Activated CD8-positive, alpha-beta memory T cell treated with anti-CD3 and anti-CD28 coated beads, Interleukin-2, amount 10 ng/mL, durations not matched to agents 7 days and 5 days (primary cell): ENCODE measurements at regions of chr2 and their contacts with region 1.

Region 1: GRCh38 chr2:28594289-28595108 is 98.6 kb downstream of the PLB1 start:
- DNase-seq: peak; percentile 89
- ATAC-seq: peak; percentile 91
- H3K4me3 Mint-ChIP-seq: peak overlapping the region; percentile 6
- H3K27ac Mint-ChIP-seq: peak overlapping the region; percentile 57
- H3K4me1 Mint-ChIP-seq: peaks cover 14% of the 10 kb centered on the region
- H3K27me3 Mint-ChIP-seq: no peaks in the 10 kb centered on the region

Region 2: DNA sequence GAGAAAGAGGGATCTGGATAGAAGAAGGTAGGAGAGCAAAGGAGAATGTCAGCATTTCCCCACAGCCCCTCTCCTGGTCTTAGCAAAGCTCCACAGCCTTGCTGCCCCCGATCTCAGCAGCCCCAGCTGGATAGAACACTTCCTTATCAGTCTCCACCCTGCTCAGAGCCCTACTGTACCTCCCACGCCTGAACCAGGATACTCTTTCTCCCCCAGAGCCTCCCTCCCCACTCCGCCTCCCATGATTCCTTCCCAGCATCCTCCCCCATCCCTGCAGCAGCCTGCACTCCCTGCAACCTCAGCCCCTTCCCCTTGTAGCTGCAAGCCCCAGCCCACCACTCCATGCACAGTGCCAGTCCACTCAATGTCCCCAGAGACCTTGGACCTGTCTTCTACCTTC is 72.8 kb before region 1 on chr2:
- CTCF ChIA-PET with region 1: no interaction called
- DNase-seq: no peak
- ATAC-seq: no peak
- H3K4me3 Mint-ChIP-seq: no peak overlapping the region
- H3K27ac Mint-ChIP-seq: no peak overlapping the region
- H3K4me1 Mint-ChIP-seq: peaks cover 10% of the 10 kb centered on the region
- H3K27me3 Mint-ChIP-seq: peaks cover 73% of the 10 kb centered on the region

Region 3: GRCh38 chr2:28566521-28567041 is 27.9 kb before region 1 on chr2:
- CTCF ChIA-PET with region 1: interaction called, 43 read pairs
- DNase-seq: peak; percentile 91
- ATAC-seq: peak; percentile 95
- H3K4me3 Mint-ChIP-seq: peak overlapping the region; percentile 84
- H3K27ac Mint-ChIP-seq: peak overlapping the region; percentile 84
- H3K4me1 Mint-ChIP-seq: peaks cover 22% of the 10 kb centered on the region
- H3K27me3 Mint-ChIP-seq: peaks cover 16% of the 10 kb centered on the region

Region 4: GRCh38 chr2:28583899-28584553 is 10.5 kb before region 1 on chr2:
- CTCF ChIA-PET with region 1: interaction called, 44 read pairs
- DNase-seq: peak; percentile 71
- ATAC-seq: peak; percentile 76
- H3K4me3 Mint-ChIP-seq: no peak overlapping the region
- H3K27ac Mint-ChIP-seq: no peak overlapping the region
- H3K4me1 Mint-ChIP-seq: peaks cover 41% of the 10 kb centered on the region
- H3K27me3 Mint-ChIP-seq: no peaks in the 10 kb centered on the region

Region 5: DNA sequence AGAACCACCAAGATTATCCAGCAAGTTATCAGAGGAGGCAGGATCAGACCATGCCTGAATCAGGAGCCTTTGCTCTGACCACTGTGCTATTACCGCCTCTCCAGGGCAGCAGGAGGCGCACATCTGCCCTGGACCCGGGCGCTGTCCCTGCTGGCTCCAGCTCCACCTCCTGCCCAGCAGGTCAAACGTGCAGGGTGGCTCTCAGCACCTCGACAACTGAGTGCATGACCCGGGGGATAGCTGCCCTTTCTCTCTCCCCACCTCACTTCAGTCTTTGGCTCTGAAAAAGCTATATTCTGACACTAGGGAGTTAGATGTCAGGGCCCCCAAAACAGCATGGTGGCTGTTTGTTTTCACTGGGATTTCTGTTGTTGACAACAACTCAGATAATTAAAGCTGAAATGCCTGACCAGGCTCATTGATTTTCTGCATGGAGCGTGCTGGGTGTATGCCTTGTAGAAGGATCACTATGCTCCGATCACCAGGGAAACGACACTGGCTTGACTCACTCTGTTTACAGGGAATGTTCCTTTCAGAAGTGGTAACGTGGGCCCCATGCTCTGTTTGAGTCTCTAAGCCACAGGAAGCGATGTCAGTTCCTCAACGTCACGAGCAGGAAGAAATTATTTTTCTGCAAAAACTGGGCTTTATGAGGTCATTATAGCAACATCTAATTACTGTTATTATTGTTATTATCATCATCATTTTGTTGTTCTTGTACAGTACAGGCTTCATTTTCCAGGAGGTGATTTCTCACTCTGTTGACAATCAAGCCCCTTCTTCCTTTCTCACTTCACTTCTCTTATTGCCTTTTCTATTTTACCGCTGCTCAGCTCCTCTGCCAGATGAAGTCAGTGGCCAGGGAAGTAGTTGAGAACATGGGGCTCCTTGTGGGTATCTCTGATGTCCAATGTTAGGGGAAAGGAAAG is 26.9 kb after region 1 on chr2:
- CTCF ChIA-PET with region 1: interaction called, 30 read pairs
- DNase-seq: peak; percentile 84
- ATAC-seq: peak; percentile 88
- H3K4me3 Mint-ChIP-seq: peak overlapping the region; percentile 36
- H3K27ac Mint-ChIP-seq: peak overlapping the region; percentile 96
- H3K4me1 Mint-ChIP-seq: peaks cover 82% of the 10 kb centered on the region
- H3K27me3 Mint-ChIP-seq: no peaks in the 10 kb centered on the region

Region 6: GRCh38 chr2:28751252-28751955 is 156.9 kb after region 1 on chr2 and contains the start of gene PPP1CB:
- CTCF ChIA-PET with region 1: interaction called, 142 read pairs
- DNase-seq: peak; percentile 95
- ATAC-seq: peak; percentile 86
- H3K4me3 Mint-ChIP-seq: peak within 1 kb of the TSS; percentile 91
- H3K27ac Mint-ChIP-seq: peak within 1 kb of the TSS; percentile 97
- H3K4me1 Mint-ChIP-seq: peaks cover 55% of the 10 kb centered on the region
- H3K27me3 Mint-ChIP-seq: no peaks in the 10 kb centered on the region
- total RNA-seq, gene PPP1CB: 153 to 218 TPM

Region 7: DNA sequence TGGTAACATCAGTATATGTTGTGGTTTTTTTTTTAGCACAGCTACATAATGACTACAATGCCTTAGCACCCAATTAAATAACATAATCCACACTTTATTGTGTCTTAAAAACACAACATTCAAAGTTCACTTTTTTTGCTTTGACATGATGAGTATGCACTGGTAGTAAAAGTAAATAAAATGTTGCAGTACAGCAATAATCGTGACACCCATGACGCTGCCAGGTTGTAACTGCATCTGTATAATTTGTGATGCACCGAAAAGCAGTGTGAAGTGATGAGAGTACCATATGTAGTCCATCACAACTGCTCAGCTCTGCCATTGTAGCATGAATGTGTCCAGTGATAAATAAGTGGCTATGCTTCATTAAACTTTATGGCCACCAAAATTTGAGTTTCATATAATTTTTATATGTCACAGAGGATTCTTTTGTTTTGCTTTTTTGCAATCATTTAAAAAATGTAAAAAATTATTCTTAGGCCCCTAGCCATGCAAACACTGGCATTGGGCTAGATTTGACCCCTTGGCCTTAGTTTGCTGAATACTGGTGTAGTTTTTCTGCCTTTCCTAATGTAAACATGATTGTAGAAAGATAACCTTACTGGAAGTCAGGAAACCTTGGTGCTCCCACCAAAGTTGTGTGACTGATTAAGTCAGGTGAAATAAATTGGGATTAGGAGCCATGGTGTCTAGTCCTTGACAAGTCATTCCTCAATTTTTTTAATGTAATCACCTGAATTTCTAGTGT is 173.0 kb after region 1 on chr2:
- CTCF ChIA-PET with region 1: interaction called, 25 read pairs
- DNase-seq: no peak
- ATAC-seq: no peak
- H3K4me3 Mint-ChIP-seq: no peak overlapping the region
- H3K27ac Mint-ChIP-seq: no peak overlapping the region
- H3K4me1 Mint-ChIP-seq: peaks cover 26% of the 10 kb centered on the region
- H3K27me3 Mint-ChIP-seq: no peaks in the 10 kb centered on the region

Region 8: GRCh38 chr2:28821295-28821958 is 226.9 kb after region 1 on chr2:
- CTCF ChIA-PET with region 1: interaction called, 14 read pairs
- DNase-seq: peak; percentile 71
- ATAC-seq: peak; percentile 87
- H3K4me3 Mint-ChIP-seq: no peak overlapping the region
- H3K27ac Mint-ChIP-seq: no peak overlapping the region
- H3K4me1 Mint-ChIP-seq: peaks cover 10% of the 10 kb centered on the region
- H3K27me3 Mint-ChIP-seq: no peaks in the 10 kb centered on the region